ENCODE measurements at regions of chr14 and their contacts with region 1.

Region 1: DNA sequence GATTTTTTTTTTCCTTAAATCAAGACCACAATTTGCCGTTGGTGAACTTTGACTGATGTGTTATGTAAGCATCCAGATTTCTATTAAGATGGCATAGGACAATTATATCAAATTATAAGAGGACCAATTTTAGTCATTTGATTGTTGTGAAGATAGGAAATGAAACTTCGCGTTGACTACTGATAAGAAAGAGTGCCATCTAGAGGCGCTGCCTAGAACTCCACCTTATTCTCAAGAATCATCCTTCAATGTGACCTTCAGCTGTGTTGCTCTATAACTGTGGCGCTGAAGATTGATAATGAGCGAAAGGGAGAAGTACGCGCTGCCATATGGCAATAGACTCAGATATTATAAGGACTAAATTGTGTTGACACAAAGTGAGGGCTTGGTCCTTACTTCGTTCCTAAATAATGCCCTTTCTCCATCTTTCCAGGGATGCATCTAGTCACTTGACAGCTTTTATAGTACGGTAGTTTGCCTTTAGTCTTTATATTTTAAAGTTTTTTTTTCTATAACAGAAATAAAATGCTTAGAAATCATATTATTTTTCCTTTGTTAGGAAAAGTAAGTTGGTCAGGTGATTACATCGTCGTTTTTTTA is 350.8 kb upstream of the STXBP6 start:
- DNase-seq: peak; percentile 60
- H3K4me3 Mint-ChIP-seq: no peak overlapping the region
- H3K27ac Mint-ChIP-seq: no peak overlapping the region
- H3K4me1 Mint-ChIP-seq: peaks cover 2% of the 10 kb centered on the region
- H3K27me3 Mint-ChIP-seq: peaks cover 2% of the 10 kb centered on the region

Region 2: DNA sequence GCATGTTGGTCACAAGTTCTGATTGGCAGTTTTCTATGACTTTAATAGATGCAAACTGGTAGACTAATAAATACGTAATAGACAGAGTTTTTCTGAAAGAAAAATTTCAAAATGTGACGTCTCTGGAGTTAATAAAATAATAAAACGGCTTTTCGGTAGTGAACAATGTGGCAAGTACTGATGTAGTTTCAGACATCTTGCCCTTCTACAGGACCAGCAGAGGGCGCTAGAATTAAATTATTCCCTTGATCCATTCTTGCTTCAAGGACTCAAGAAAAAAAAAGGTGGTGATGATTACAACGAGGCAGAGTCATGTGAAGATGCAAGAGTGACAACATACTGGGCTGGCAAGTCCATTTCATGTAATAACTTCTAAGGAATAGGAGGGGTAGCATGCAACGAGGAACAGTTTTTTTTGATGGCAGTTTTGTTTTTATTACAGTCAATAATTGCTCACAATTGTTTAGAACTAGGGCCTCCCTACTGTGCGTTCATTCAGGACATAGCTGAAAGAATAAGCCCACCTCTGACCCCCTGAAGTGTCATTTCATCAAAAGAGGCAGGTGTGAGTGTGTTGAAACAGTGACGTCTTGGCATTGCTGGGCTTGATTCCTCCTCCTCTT is 665.7 kb before region 1 on chr14:
- CTCF ChIA-PET with region 1: no interaction called
- intact Hi-C with region 1: loop called (anchors 10 kb)
- DNase-seq: peak; percentile 45
- H3K4me3 Mint-ChIP-seq: no peak overlapping the region
- H3K27ac Mint-ChIP-seq: no peak overlapping the region
- H3K4me1 Mint-ChIP-seq: no peaks in the 10 kb centered on the region
- H3K27me3 Mint-ChIP-seq: peaks cover 7% of the 10 kb centered on the region

Region 3: GRCh38 chr14:24806061-24806678 is 594.5 kb before region 1 on chr14:
- CTCF ChIA-PET with region 1: no interaction called
- intact Hi-C with region 1: loop called (anchors 5 kb)
- DNase-seq: peak; percentile 68
- H3K4me3 Mint-ChIP-seq: no peak overlapping the region
- H3K27ac Mint-ChIP-seq: no peak overlapping the region
- H3K4me1 Mint-ChIP-seq: no peaks in the 10 kb centered on the region
- H3K27me3 Mint-ChIP-seq: peaks cover 7% of the 10 kb centered on the region

Region 4: GRCh38 chr14:25108959-25109358 is 291.7 kb before region 1 on chr14:
- CTCF ChIA-PET with region 1: no interaction called
- intact Hi-C with region 1: no loop called
- DNase-seq: no peak
- H3K4me3 Mint-ChIP-seq: no peak overlapping the region
- H3K27ac Mint-ChIP-seq: no peak overlapping the region
- H3K4me1 Mint-ChIP-seq: no peaks in the 10 kb centered on the region
- H3K27me3 Mint-ChIP-seq: peaks cover 6% of the 10 kb centered on the region

Region 5: GRCh38 chr14:25389948-25390347 is 10.8 kb before region 1 on chr14:
- CTCF ChIA-PET with region 1: no interaction called
- intact Hi-C with region 1: no loop called
- DNase-seq: no peak
- H3K4me3 Mint-ChIP-seq: no peak overlapping the region
- H3K27ac Mint-ChIP-seq: no peak overlapping the region
- H3K4me1 Mint-ChIP-seq: no peaks in the 10 kb centered on the region
- H3K27me3 Mint-ChIP-seq: peaks cover 2% of the 10 kb centered on the region

Region 6: DNA sequence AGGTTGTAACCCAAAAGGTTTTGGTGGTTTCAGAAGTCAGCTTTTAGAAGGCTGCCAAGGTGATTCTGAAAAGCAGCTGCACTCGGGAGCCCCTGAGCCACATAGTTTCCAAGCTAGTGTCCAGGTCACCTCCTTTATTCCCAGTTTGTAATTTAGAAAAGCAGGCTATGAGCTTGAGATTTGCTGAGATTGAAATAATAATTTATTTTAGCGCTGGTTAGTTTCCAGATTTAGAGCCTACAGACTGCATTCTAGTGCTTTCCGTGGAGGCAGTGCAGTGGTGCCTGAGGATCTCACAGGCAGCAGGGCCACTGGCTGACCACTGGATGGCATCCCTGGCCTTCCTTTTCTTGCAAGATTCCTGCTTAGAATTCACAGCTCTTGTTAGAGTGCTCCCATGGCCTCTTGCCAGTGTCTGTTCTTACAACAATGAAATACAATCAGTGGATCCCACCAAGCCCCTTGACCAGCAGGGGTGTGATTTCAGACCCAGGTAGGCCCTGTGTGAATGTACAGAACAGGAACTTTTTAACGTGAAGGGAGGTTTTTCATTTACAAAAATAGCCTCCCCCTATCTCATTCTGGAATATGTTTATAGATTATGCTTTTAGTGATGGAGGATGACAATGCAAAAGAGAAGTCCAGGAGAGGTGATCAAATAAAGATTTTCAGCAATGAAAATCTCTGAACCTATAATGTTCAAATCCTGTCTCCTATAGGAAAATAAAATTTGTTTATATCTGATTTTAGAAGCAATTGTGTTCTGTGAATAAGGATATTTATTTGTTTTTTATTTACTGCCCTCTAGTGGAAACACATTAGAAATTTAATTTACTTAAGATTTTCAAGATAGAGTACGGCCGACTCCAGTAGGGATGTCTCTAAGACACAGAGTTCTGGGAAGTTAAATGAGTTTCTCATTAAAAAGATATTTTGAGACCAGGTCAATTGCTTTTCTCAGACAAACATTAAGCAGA is 11.4 kb after region 1 on chr14:
- CTCF ChIA-PET with region 1: interaction called, 10 read pairs
- intact Hi-C with region 1: no loop called
- DNase-seq: no peak
- H3K4me3 Mint-ChIP-seq: no peak overlapping the region
- H3K27ac Mint-ChIP-seq: no peak overlapping the region
- H3K4me1 Mint-ChIP-seq: no peaks in the 10 kb centered on the region
- H3K27me3 Mint-ChIP-seq: peaks cover 2% of the 10 kb centered on the region

Measured in activated naive CD4-positive, alpha-beta T cell treated with anti-CD3 and anti-CD28 coated beads for 36 hours (primary cell).